ENCODE measurements at regions of chr19 and their contacts with region 1.

Region 1: GRCh38 chr19:41872775-41873647 is 4.1 kb upstream of the CD79A start:
- DNase-seq: peak; percentile 80
- H3K4me3 Mint-ChIP-seq: no peak overlapping the region
- H3K27ac Mint-ChIP-seq: peak overlapping the region; percentile 99
- H3K4me1 Mint-ChIP-seq: peaks cover 98% of the 10 kb centered on the region
- H3K27me3 Mint-ChIP-seq: no peaks in the 10 kb centered on the region

Region 2: DNA sequence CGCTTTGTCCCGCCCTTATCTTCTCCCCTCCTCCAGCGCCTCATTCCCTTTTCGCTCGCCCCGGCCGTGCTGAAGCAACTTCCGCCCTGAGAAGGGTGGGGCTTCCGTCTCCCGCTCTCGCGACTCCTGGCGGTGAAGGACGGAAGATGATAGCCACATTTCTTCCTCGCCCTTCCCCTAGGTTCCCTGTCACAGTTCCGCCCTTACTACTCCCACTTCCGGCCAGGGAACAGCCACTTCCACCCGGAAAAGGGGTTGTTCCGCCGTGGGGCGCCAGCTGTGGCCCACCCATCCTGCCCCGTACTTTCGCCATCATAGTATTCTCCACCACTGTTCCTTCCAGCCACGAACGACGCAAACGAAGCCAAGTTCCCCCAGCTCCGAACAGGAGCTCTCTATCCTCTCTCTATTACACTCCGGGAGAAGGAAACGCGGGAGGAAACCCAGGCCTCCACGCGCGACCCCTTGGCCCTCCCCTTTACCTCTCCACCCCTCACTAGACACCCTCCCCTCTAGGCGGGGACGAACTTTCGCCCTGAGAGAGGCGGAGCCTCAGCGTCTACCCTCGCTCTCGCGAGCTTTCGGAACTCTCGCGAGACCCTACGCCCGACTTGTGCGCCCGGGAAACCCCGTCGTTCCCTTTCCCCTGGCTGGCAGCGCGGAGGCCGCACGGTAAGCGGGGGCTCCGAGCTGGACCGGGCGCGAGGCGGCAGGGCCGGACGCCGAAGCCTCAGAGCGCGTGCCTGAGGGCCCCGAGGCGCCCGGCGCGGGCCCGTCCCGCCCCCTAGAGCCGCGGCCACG is 13.2 kb before region 1 on chr19 and contains the start of gene RPS19:
- CTCF ChIA-PET with region 1: interaction called, 37 read pairs
- DNase-seq: peak; percentile 98
- H3K4me3 Mint-ChIP-seq: peak within 1 kb of the TSS; percentile 82
- H3K27ac Mint-ChIP-seq: peak within 1 kb of the TSS; percentile 92
- H3K4me1 Mint-ChIP-seq: peaks cover 46% of the 10 kb centered on the region
- H3K27me3 Mint-ChIP-seq: peaks cover 4% of the 10 kb centered on the region

Region 3: GRCh38 chr19:41892173-41892902 is 19.3 kb after region 1 on chr19:
- CTCF ChIA-PET with region 1: interaction called, 66 read pairs
- DNase-seq: no peak
- H3K4me3 Mint-ChIP-seq: no peak overlapping the region
- H3K27ac Mint-ChIP-seq: peak overlapping the region; percentile 76
- H3K4me1 Mint-ChIP-seq: peaks cover 54% of the 10 kb centered on the region
- H3K27me3 Mint-ChIP-seq: no peaks in the 10 kb centered on the region

Region 4: DNA sequence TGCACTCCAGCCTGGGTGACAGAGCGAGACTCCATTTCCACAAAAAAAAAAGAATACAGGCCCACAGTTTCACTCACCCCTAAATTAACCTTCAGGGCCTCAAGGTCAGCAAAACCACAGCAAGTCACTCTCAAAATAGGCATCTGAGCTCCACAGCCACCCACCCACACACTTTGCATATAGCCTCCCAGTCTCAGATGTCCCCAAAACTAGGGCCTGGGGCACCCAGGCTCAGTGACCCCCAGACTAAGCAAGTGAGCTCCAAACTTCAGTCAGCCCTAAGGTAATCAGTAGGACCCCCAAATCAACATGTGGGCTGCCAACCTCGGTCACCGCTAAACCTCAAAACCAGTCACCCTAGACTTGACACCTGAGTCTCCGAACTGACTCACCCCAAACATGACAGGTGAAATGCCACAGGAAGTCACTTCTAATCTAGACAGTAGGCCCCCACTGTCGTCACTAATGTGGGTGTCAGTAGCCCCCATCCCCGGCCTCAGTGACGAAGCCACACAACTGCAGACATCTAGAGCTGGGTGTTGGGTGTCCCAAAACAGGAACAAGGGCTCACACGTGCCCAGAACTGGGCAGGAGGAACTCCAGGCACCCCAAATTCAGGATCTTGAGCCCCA is 72.2 kb after region 1 on chr19:
- CTCF ChIA-PET with region 1: interaction called, 30 read pairs
- DNase-seq: peak; percentile 83
- H3K4me3 Mint-ChIP-seq: no peak overlapping the region
- H3K27ac Mint-ChIP-seq: peak overlapping the region; percentile 91
- H3K4me1 Mint-ChIP-seq: peaks cover 42% of the 10 kb centered on the region
- H3K27me3 Mint-ChIP-seq: peaks cover 36% of the 10 kb centered on the region

Region 5: GRCh38 chr19:41959056-41960053 is 86.3 kb after region 1 on chr19 and contains the start of gene RABAC1:
- CTCF ChIA-PET with region 1: interaction called, 18 read pairs
- DNase-seq: peak; percentile 95
- H3K4me3 Mint-ChIP-seq: peak within 1 kb of the TSS; percentile 86
- H3K27ac Mint-ChIP-seq: peak within 1 kb of the TSS; percentile 85
- H3K4me1 Mint-ChIP-seq: peaks cover 27% of the 10 kb centered on the region
- H3K27me3 Mint-ChIP-seq: no peaks in the 10 kb centered on the region